ENCODE measurements at regions of chr3 and their contacts with region 1.

Region 1: DNA sequence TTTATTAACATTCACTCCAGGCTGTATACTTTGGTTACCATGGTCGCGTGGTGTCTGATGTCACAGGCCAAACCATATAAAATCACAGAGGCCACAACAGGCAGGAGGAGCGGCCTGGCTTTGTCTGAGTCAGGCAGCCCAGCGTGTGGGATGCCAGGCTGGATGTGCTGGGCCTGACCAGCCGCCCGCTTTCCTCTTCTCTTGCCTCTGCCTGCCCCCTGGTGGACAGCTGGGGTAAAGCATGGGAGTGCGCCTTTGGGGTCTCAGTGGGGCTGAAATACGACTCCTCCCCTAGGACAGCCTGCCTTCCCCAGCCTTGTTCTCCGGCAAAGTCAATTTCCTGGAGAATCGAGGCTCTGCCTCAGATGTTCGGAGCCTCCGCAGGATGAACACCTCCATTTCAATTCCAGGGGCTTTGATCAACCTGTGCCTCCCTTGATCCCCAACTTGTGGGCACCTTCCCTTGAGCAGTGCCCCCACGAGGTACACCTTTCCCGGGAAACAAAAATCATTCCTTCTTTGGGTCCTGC is 78.2 kb downstream of the CCNL1 start:
- DNase-seq: peak; percentile 94 to 98
- ATAC-seq: peak; percentile 94
- H3K4me3 ChIP-seq: no peak overlapping the region
- H3K27ac ChIP-seq: no peak overlapping the region
- H3K4me1 ChIP-seq: peaks cover 0 to under 1% of the 10 kb centered on the region in 2 donors
- H3K27me3 ChIP-seq: no peaks in the 10 kb centered on the region

Region 2: DNA sequence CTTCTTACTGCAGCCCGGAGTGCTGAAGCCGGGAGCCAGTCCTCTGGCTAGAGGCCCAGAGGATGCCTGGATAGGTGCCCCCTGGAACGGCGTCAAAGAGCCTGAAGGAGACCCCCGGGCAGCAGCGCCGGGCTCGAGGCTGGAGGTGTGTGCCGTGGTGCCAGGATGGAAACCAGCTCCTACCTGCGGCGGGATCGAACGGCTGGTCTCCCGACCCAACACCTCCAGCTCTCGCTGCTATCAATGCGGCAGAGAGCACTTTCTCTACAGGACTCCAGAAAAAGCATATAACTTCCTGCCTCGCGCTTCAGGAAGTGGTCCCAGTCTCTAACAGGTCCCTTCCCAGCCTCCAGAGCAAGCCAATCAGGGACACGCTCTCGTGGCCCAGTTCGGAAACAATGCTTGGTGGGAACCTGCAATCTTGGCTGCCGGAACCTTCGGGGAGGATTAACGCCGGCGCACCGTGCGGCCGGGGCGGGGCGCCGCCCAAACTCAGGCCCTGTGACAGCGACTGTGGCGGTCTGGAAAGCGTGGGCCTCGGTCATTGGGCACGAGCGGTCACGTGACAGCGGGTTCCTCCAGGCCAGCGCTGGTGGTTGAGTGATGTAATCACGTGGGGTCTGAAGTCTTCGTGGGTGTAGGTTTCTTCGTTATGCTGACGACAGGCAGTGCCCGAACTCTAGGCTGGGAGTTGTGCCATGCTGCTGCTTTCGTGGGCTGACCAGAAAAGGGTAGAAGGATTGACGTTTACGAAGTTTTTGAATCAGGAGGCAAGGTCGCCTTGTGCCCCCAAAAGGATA is 1227.4 kb before region 1 on chr3 and contains the start of gene SLC33A1:
- intact Hi-C with region 1: loop called in 1 of 2 experiments (anchors 10 kb)
- DNase-seq: peak; percentile 100
- ATAC-seq: peak; percentile 100
- H3K4me3 ChIP-seq: peak within 1 kb of the TSS; percentile 72 to 76
- H3K27ac ChIP-seq: peak within 1 kb of the TSS; percentile 52 to 87
- H3K4me1 ChIP-seq: peaks cover 0 to 18% of the 10 kb centered on the region in 2 donors
- H3K27me3 ChIP-seq: no peaks in the 10 kb centered on the region
- total RNA-seq, gene SLC33A1: 27.1 to 28.5 TPM

Region 3: GRCh38 chr3:156151824-156152428 is 929.8 kb before region 1 on chr3:
- intact Hi-C with region 1: loop called (anchors 5 to 10 kb)
- DNase-seq: peak; percentile 81 to 90
- ATAC-seq: peak; percentile 60
- H3K4me3 ChIP-seq: no peak overlapping the region
- H3K27ac ChIP-seq: peak overlapping the region in 1 of 2 donors; percentile 61
- H3K4me1 ChIP-seq: peaks cover 4 to 16% of the 10 kb centered on the region in 2 donors
- H3K27me3 ChIP-seq: no peaks in the 10 kb centered on the region

Region 4: DNA sequence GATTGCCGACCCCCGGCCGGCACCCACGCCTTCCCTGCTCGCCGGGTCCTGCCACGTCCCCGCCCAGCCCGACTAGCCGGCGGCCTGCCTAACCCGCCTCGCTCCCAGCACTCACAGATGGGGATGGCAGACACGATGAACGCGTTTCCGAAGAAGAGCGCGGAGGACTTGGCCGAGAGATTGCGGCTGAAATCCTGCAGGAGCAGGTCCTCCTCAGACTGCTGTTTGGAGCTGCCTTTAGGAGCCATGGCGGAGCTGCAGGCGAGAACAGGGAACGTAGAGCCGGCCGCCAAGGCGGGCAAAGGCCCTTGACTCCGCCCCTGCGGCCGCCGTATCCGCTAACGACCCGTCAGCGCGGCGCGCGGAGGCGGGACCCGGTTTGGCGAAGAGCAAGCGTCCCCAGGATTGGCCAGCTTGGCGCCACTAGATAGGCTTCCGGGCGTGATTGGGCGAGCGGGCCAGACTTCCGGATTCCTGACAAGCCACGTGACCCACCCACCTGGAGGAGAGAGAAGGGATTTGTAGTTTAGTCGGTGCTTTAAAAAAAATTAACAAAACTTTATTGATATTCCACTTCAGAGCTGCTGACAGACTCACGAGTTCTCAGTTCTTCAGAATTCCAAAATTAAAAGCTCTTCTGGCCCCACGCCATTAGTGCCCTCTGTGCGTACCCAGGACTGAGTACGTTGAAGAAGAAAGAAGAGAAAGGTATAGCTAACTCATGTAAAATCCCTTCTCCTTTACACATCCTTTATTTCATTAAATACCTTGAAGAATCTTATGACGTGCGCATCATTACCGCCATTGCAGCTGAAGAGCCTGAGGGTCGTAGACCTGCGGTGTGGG is 526.7 kb before region 1 on chr3 and contains the start of gene SSR3:
- intact Hi-C with region 1: loop called (anchors 5 kb)
- DNase-seq: peak; percentile 100
- ATAC-seq: peak; percentile 100
- H3K4me3 ChIP-seq: peak within 1 kb of the TSS; percentile 43 to 61
- H3K27ac ChIP-seq: peak within 1 kb of the TSS in 1 of 2 donors; percentile 70
- H3K4me1 ChIP-seq: peaks cover 2 to 4% of the 10 kb centered on the region in 2 donors
- H3K27me3 ChIP-seq: no peaks in the 10 kb centered on the region
- total RNA-seq, gene SSR3: 120 to 135 TPM

Region 5: GRCh38 chr3:156837115-156837514 is 244.6 kb before region 1 on chr3:
- intact Hi-C with region 1: loop called in 1 of 2 experiments (anchors 10 kb)
- DNase-seq: no peak
- ATAC-seq: no peak
- H3K4me3 ChIP-seq: no peak overlapping the region
- H3K27ac ChIP-seq: no peak overlapping the region
- H3K4me1 ChIP-seq: no peaks in the 10 kb centered on the region
- H3K27me3 ChIP-seq: no peaks in the 10 kb centered on the region

Region 6: DNA sequence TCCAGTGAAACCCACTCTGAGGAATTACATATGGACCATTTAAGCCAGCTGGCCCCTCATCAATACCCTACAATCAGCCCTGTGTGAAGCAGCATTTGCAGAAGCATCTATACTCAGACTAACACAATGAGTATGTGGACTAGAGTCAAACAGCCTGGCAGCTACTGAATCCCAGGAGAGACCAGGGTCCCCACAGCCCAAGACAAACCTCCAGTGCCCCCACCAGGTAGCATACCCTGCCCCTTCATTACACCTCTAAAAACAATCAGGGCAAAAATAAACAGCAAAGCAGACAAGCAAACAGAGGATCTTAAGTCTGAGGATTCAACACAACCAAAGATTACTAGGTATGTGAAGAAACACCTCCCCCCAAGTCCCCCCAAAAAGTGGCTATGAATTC is 98.2 kb before region 1 on chr3:
- intact Hi-C with region 1: no loop called
- DNase-seq: no peak
- ATAC-seq: no peak
- H3K4me3 ChIP-seq: no peak overlapping the region
- H3K27ac ChIP-seq: no peak overlapping the region
- H3K4me1 ChIP-seq: no peaks in the 10 kb centered on the region
- H3K27me3 ChIP-seq: no peaks in the 10 kb centered on the region

Measured in aorta (tissue), 5 donors.